Left colon (tissue), 2 donors: ENCODE measurements at regions of chr5 and their contacts with region 1.

Region 1: DNA sequence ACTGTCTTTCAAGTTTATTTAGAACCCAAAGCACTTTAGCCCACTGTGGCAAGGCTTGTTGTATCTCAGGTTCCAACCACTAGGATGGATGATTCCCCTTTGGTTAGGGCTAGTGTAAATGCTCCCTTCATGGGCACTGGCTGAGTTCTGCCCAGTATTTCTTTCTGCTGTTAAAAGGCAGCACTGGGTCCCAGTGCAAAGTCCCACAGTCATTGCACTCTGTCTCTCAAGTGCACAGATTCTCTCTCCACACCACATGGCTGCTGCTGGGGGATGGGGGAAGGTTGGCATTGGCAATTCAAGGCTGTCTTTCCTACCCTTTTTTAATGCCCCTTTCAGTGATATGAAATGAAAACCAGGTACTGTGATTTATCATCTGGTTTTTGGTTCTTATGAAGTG is 7.2 kb upstream of the NPR3 start:
- DNase-seq: no peak
- ATAC-seq: no peak

Region 2: DNA sequence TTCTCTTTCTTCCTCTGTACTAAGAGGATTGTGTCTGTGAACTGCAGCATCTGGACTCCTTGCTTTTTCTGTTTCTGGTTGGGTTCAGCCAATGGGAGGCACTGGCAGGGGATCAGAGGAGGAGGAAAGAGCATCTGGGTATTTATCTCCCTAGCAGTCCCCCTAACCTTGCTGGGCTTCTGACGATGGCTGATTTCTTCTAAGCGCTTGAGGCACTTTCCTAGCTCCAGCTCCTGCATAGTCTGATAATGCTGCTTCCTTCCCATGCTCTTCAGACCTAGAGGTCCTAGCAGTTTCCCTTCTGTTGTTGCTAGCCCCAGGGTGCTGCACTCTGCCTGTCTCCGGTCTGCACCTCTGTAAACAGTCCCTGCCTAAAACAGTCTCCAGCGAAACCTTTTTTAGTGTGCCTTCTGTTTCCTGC is 840.0 kb before region 1 on chr5:
- intact Hi-C with region 1: no loop called
- DNase-seq: no peak
- ATAC-seq: no peak

Region 3: GRCh38 chr5:32645246-32645645 is 58.7 kb before region 1 on chr5:
- intact Hi-C with region 1: no loop called
- DNase-seq: no peak
- ATAC-seq: no peak

Region 4: DNA sequence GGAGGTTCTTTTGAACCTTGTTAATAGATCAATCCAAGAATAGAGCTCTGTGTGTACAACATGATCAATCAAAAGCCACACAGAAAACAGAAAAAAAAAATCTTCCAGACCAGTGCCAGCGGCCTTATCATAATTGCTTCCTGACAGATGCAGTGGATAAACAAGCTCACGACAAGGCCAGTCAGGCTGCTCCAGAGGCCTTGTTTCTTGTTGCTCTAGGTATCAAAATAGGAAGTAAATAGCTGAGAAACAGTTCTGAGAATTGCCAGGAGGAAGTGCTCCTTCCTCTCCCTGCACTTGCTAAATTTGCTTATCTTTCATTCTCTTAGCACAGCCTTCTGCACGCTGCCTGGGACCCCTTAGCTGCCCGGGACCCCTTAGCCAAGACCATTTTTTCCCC is 537.8 kb after region 1 on chr5:
- intact Hi-C with region 1: no loop called
- DNase-seq: peak in 1 of 2 donors; percentile 25
- ATAC-seq: peak; percentile 38

Region 5: DNA sequence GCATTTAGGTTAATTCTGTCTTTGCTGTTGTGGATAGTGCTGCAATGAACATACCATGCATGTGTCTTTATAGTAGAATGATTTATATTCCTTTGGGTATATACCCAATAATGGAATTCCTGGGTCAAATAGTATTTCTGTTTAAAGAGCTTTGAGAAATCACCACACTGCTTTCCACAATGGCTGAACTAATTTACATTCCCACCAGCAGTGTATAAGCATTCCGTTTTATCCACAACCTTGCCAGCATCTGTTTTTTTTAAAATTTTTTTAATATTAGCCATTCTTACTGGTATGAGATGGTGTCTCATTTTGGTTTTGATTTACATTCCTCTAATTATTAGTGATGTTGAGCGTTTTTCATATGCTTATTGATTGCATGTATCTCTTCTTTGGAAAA is 721.4 kb after region 1 on chr5:
- intact Hi-C with region 1: loop called in 1 of 2 experiments (anchors 5 kb)
- DNase-seq: no peak
- ATAC-seq: no peak